ENCODE measurements at regions of chr6 and their contacts with region 1.

Region 1: GRCh38 chr6:6057424-6058053 is 50.8 kb upstream of the NRN1 start:
- DNase-seq: no peak
- H3K4me3 ChIP-seq: no peak overlapping the region
- H3K27ac ChIP-seq: no peak overlapping the region
- H3K4me1 ChIP-seq: no peaks in the 10 kb centered on the region
- H3K27me3 ChIP-seq: no peaks in the 10 kb centered on the region
- CTCF ChIP-seq: peak in 1 of 3 experiments; percentile 27
- POLR2A ChIP-seq: no peak

Region 2: GRCh38 chr6:4889701-4890100 is 1167.8 kb before region 1 on chr6:
- intact Hi-C with region 1: loop called (anchors 10 kb)
- DNase-seq: peak in 1 of 2 donors; percentile 52
- H3K4me3 ChIP-seq: no peak overlapping the region
- H3K27ac ChIP-seq: no peak overlapping the region
- H3K4me1 ChIP-seq: no peaks in the 10 kb centered on the region
- H3K27me3 ChIP-seq: no peaks in the 10 kb centered on the region
- CTCF ChIP-seq: no peak
- POLR2A ChIP-seq: no peak